Activated T-helper 2 cell treated with anti-CD3 and anti-CD28 coated beads, Interferon-gamma antibody, Interleukin-2, Interleukin-4, amounts not matched to agents 10 μg/mL and 5 μg/mL and 100 μg/mL, durations not matched to agents 14 hours and 24 hours and 36 hours (primary cell): ENCODE measurements at regions of chr2 and their contacts with region 1.

Region 1: GRCh38 chr2:37635504-37636380 is 35.7 kb downstream of the CDC42EP3 start:
- DNase-seq: peak; percentile 61
- H3K4me3 Mint-ChIP-seq: no peak overlapping the region
- H3K27ac Mint-ChIP-seq: peak overlapping the region; percentile 74
- H3K4me1 Mint-ChIP-seq: peaks cover 44% of the 10 kb centered on the region
- H3K27me3 Mint-ChIP-seq: peaks cover 4% of the 10 kb centered on the region

Region 2: GRCh38 chr2:36589230-36589630 is 1046.5 kb before region 1 on chr2:
- intact Hi-C with region 1: no loop called
- DNase-seq: no peak
- H3K4me3 Mint-ChIP-seq: no peak overlapping the region
- H3K27ac Mint-ChIP-seq: no peak overlapping the region
- H3K4me1 Mint-ChIP-seq: peaks cover 2% of the 10 kb centered on the region
- H3K27me3 Mint-ChIP-seq: no peaks in the 10 kb centered on the region

Region 3: DNA sequence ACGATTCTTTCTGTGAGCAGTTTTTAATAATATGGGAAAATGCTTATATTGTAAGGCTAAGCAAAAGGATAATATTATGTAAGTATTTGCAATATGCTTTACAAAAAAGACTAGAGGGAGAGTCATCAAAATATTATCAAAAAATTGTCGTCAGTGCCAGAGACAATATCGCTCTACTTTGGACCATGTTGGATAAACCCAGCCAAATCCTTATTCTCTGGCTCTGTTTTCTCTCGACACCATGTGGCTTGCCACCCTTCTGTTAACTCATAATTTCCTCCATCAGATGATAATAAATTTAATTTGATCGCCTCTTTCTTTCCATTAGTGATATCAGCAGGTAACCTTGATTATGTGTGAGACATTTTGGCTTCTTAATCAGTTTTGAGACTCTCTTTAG is 94.2 kb before region 1 on chr2:
- intact Hi-C with region 1: no loop called
- DNase-seq: no peak
- H3K4me3 Mint-ChIP-seq: no peak overlapping the region
- H3K27ac Mint-ChIP-seq: no peak overlapping the region
- H3K4me1 Mint-ChIP-seq: no peaks in the 10 kb centered on the region
- H3K27me3 Mint-ChIP-seq: peaks cover 31% of the 10 kb centered on the region

Region 4: GRCh38 chr2:37561615-37562569 is 73.8 kb before region 1 on chr2:
- intact Hi-C with region 1: loop called (anchors 1 kb)
- DNase-seq: no peak
- H3K4me3 Mint-ChIP-seq: no peak overlapping the region
- H3K27ac Mint-ChIP-seq: peak overlapping the region; percentile 19
- H3K4me1 Mint-ChIP-seq: peaks cover 18% of the 10 kb centered on the region
- H3K27me3 Mint-ChIP-seq: no peaks in the 10 kb centered on the region

Region 5: DNA sequence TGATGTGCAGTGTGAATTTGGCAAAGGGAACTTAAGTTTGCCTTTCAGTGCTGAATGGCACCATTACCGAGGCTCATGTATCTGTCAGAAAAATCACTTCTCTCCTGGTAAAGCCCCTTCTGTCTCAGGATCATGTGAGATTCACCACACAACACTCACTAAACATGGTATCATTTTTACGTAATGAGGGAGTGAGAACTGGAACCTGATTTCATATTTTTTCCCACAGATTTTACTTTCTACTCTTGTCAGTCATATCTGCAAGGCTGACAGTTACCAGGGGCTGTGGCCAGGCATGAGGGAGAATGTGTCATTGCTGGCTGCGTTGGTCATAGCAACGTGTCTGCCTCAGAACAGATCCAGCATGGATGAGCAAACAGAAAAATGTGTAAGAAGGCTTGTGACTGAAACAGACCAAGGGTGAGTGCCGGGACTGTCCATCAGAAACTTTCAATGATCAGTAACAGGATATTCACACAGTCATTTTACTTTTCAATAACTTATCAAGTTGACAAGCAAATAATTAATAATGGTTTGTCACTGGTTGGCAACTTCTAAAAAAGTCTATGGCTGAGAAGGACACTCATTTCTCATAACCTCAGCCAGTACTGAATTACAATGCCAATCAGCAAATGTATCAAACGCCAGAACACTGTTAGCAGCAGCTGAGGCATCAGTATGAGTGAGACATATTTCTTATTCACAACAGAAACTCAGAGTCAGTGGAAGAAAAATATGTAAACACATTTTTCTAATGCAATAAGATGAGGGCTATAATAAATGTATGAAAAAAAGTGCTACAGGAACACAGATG is 64.8 kb before region 1 on chr2:
- intact Hi-C with region 1: loop called (anchors 2 kb)
- DNase-seq: no peak
- H3K4me3 Mint-ChIP-seq: no peak overlapping the region
- H3K27ac Mint-ChIP-seq: no peak overlapping the region
- H3K4me1 Mint-ChIP-seq: peaks cover 31% of the 10 kb centered on the region
- H3K27me3 Mint-ChIP-seq: peaks cover 8% of the 10 kb centered on the region

Region 6: DNA sequence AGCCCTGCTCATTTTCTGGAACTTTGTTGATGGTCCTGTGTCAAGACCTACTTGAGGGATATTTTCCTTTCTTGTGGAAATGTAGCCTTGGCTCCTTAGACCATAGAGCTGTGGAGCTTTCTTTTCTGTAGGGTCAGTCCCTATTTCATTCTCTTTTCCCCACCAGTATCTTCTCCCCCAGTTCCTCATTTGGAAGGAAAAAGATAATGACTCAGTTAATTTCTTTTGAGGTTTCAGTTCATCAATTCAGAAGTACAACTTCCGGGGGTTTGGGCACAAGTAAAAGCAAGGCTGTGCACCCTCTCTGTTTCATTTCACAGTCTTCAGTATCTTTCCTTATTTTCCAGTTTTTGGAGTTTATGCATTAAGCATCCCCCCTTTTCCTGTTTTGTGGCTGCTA is 35.0 kb before region 1 on chr2:
- intact Hi-C with region 1: no loop called
- DNase-seq: no peak
- H3K4me3 Mint-ChIP-seq: no peak overlapping the region
- H3K27ac Mint-ChIP-seq: no peak overlapping the region
- H3K4me1 Mint-ChIP-seq: peaks cover 38% of the 10 kb centered on the region
- H3K27me3 Mint-ChIP-seq: peaks cover 9% of the 10 kb centered on the region

Region 7: GRCh38 chr2:37623971-37624900 is 11.5 kb before region 1 on chr2:
- intact Hi-C with region 1: loop called (anchors 1 kb)
- DNase-seq: no peak
- H3K4me3 Mint-ChIP-seq: no peak overlapping the region
- H3K27ac Mint-ChIP-seq: peak overlapping the region; percentile 30
- H3K4me1 Mint-ChIP-seq: peaks cover 42% of the 10 kb centered on the region
- H3K27me3 Mint-ChIP-seq: no peaks in the 10 kb centered on the region

Region 8: DNA sequence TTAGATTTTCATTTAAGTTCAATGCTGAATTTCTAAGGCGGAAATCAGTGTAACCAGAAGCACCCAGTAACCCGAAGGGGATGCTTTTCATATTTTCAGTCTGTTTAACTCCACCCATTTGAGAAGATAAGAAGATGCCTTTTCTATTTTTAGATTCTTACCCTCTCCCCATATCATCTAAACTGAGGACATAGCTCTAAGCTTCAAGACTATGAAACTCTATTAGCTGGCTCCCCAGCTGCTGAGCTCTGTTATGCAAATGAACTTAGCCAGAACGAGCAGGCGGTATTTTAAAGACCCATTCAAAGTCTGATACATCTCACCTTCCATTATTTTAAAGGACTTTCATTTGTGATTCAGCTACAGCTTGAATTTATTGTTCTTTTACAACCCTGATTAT is 19.2 kb after region 1 on chr2:
- intact Hi-C with region 1: no loop called
- DNase-seq: no peak
- H3K4me3 Mint-ChIP-seq: no peak overlapping the region
- H3K27ac Mint-ChIP-seq: no peak overlapping the region
- H3K4me1 Mint-ChIP-seq: peaks cover 55% of the 10 kb centered on the region
- H3K27me3 Mint-ChIP-seq: no peaks in the 10 kb centered on the region

Region 9: DNA sequence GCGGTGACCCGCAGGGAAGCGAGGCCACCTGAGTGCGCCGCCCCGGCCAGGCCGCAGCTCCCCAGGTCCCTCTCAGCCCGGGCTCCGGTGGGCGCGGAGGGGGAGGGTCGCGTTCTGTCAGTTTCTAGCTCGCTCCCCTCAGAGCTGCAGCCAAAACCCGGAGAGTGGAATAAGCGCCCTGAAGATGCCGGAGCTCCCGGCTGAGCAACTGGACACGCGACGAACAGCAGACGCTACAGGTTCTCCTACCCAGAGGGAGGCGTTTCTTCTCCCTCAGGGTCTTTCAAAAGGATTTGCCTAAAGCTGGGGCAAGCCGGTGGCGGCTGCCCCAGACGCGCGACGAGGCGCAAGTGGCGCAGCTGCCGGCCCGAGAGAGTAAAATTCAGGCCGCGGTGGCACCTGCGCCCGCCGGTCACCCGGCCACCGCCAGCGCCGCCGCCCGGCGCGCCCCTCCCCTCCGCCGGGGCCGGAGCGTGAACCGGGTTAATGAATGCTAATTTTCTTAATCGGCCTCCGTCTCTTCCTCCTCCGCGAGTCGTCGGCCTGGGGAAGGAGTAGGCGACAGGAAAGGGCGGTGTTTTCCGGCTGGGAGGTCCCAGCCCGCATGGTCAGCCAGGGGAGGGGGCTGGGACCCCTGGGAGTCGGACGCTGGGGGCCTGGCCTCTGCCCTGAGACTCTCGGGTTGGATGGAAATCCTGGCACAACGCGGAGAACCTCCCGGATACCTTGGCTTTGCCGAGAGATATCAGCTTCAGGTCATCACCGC is 36.5 kb after region 1 on chr2:
- intact Hi-C with region 1: loop called (anchors 1 kb)
- DNase-seq: peak; percentile 65
- H3K4me3 Mint-ChIP-seq: peak overlapping the region; percentile 75
- H3K27ac Mint-ChIP-seq: peak overlapping the region; percentile 65
- H3K4me1 Mint-ChIP-seq: peaks cover 32% of the 10 kb centered on the region
- H3K27me3 Mint-ChIP-seq: peaks cover 2% of the 10 kb centered on the region

Region 10: DNA sequence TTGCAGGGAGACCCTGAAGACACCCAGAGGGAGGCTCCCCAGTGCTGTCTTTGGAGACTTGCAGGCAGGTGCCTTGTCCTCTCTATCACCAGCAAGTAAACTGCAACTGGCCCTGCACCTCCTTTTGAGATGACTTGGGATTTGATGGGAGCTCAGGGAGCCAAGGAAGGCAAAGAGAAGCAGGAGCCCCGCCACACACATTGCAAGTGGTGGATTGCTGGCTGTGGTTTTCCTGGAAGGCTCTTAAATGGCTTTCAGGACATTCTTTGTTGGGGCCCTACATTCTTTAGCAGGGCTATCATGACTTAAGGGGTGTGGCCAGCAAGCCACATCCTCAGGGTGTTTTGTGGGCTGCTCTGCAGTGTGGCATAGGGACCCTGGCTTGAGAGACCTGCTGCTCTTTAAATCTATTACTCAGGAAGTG is 75.6 kb after region 1 on chr2:
- intact Hi-C with region 1: loop called (anchors 1 kb)
- DNase-seq: peak; percentile 46
- H3K4me3 Mint-ChIP-seq: no peak overlapping the region
- H3K27ac Mint-ChIP-seq: no peak overlapping the region
- H3K4me1 Mint-ChIP-seq: peaks cover 49% of the 10 kb centered on the region
- H3K27me3 Mint-ChIP-seq: peaks cover under 1% of the 10 kb centered on the region

Region 11: GRCh38 chr2:37871456-37872191 is 235.9 kb after region 1 on chr2:
- intact Hi-C with region 1: loop called (anchors 5 kb)
- DNase-seq: no peak
- H3K4me3 Mint-ChIP-seq: peak overlapping the region; percentile 10
- H3K27ac Mint-ChIP-seq: peak overlapping the region; percentile 86
- H3K4me1 Mint-ChIP-seq: peaks cover 34% of the 10 kb centered on the region
- H3K27me3 Mint-ChIP-seq: peaks cover 2% of the 10 kb centered on the region